ENCODE measurements at regions of chr7 and their contacts with region 1.

Region 1: DNA sequence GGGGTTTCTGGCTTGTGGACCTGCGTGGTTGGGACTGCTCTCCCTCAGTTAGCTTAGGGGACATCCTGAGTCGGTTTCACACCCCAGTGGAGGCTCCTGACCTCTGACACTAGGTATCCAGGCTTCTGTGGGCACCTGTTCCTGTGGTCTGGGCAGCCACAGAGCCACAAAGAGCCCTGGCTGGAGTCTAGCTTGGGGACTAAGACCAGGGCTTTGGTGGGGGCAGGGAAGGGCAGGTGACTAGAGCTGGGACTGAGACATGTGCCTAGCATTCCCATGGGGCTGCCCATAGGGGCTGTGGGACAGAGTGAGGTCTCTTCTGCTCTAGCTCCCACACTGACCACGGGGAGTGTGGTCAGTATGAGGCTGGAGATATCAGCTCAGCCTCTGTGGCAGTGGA is 4.0 kb upstream of the TMEM270 start:
- DNase-seq: no peak
- CTCF ChIP-seq: no peak

Region 2: GRCh38 chr7:73769992-73770859 is 86.7 kb before region 1 on chr7 and contains the start of gene CLDN3:
- CTCF ChIA-PET with region 1: no interaction called
- POLR2A ChIA-PET with region 1: no interaction called
- DNase-seq: peak; percentile 50
- CTCF ChIP-seq: no peak

Region 3: DNA sequence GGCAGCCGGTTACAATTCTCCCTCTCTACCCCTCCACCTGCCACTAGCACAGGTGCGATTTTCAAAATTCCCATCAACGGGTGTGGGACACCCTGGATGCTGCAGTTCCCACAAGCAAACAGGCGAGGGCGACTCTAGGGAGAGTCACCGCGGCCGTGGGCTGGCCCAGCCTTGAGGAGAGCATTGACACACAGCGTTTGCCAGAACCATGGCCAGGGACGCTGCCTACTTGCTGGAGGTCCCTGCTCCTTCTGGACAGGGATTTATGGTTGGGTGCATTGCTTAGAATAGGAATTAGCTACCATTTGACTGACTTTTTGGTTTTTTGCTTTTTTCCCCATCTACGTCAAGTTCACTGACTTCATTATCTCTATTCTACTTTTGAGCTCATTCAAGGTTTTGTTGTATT is 45.2 kb before region 1 on chr7:
- CTCF ChIA-PET with region 1: interaction called, 27 read pairs
- POLR2A ChIA-PET with region 1: no interaction called
- DNase-seq: peak; percentile 76
- CTCF ChIP-seq: peak; percentile 73

Region 4: DNA sequence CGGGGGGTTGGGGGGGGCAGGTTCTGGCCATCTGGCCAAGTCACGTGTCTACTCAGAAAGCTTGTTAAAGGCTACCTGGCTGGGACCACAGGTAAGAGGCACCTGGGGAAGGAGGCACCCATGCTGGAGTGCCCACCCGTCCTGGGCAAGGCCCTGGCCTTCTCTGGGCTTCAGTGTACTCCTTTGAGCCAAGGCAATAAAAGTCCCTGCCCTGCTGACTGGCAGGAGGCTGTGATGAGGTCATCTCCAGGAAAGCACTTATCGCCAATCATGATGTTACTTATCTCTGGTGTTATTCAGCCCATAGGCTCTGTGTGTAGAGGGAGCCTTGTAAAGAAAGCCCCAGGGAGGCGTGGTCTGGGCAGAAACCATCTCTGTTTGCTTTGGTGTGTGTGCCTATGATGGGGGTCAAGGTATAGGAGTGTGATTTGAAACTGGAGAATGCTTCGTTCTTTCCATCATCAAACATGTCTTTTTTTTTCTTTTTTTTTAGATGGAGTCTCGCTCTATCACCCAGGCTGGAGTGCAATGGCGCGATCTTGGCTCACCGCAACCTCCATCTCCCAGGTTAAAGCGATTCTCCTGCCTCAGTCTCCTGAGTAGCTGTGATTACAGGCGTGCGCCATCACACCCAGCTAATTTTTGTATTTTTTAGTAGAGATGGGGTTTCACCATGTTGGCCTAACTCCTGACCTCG is 28.7 kb before region 1 on chr7:
- CTCF ChIA-PET with region 1: interaction called, 17 read pairs
- POLR2A ChIA-PET with region 1: no interaction called
- DNase-seq: no peak
- CTCF ChIP-seq: no peak